ENCODE measurements at regions of chr20 and their contacts with region 1.

Region 1: DNA sequence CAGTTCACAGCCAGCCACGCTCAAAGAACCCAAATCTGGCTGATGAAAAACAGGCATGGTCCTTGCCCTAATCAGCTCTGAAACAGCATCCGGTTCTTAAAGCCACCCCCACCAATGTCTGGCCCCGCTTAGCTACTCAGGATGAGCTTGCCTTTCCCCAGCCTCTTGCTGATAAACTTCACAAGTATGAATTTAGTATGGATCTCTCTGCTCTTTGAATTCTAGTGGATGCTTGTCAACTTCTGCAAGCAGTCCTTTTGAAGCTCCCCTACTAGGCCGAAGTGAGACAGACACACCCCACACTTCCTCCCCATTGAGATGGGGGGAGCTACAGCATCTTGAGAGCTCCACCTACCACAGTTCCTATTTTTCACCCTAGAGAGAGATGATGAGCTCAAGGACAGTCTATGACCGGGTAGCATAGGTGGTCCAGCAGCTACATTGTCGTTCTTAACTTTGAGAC is 36.7 kb downstream of the EBF4 start:
- DNase-seq: peak in 8 of 10 donors; percentile 27 to 71 (median 45)
- ATAC-seq: peak; percentile 97 to 98
- H3K4me3 Mint-ChIP-seq: peak overlapping the region; percentile 58 to 83 (median 73)
- H3K27ac Mint-ChIP-seq: peak overlapping the region; percentile 20 to 97 (median 94)
- H3K4me1 Mint-ChIP-seq: peaks cover 9 to 34% (median 28%) of the 10 kb centered on the region in 4 donors
- H3K27me3 Mint-ChIP-seq: peaks cover 0 to 7% (median 0%) of the 10 kb centered on the region in 5 donors

Region 2: DNA sequence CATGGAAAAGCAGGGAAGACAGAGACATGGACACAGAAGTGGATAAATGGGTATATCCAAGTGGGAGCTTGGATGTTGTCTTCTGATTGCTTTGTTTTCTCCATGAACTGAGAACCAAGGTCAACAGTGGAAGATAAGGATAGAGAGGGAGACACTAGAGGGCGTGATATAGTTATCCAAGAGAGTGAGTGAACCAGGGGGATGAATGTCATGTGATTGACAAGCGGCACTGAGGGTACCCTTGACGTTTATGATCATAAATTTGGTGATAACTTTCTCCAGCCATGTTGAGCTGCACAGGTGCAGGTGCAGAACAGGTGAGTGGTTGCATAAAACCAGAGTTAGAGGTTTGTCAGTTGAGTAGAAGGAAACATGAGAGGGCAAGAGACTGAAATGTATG is 16.0 kb before region 1 on chr20:
- POLR2A ChIA-PET with region 1: interaction called, 10 read pairs
- DNase-seq: peak in 4 of 10 donors; percentile 31 to 67 (median 56)
- ATAC-seq: peak; percentile 78 to 93
- H3K4me3 Mint-ChIP-seq: no peak overlapping the region
- H3K27ac Mint-ChIP-seq: no peak overlapping the region
- H3K4me1 Mint-ChIP-seq: peaks cover 0 to 3% (median 2%) of the 10 kb centered on the region in 4 donors
- H3K27me3 Mint-ChIP-seq: peaks cover 0 to 4% (median 0%) of the 10 kb centered on the region in 5 donors

Region 3: GRCh38 chr20:2752567-2753460 is 23.5 kb after region 1 on chr20:
- POLR2A ChIA-PET with region 1: interaction called, 14 read pairs
- DNase-seq: peak in 8 of 10 donors; percentile 23 to 58 (median 51)
- ATAC-seq: peak; percentile 22 to 26
- H3K4me3 Mint-ChIP-seq: peak overlapping the region; percentile 78 to 90 (median 84)
- H3K27ac Mint-ChIP-seq: peak overlapping the region in 8 of 10 donors; percentile 40 to 89 (median 67)
- H3K4me1 Mint-ChIP-seq: peaks cover 14 to 28% (median 26%) of the 10 kb centered on the region in 4 donors
- H3K27me3 Mint-ChIP-seq: peaks cover 3 to 14% (median 9%) of the 10 kb centered on the region in 5 donors

Region 4: DNA sequence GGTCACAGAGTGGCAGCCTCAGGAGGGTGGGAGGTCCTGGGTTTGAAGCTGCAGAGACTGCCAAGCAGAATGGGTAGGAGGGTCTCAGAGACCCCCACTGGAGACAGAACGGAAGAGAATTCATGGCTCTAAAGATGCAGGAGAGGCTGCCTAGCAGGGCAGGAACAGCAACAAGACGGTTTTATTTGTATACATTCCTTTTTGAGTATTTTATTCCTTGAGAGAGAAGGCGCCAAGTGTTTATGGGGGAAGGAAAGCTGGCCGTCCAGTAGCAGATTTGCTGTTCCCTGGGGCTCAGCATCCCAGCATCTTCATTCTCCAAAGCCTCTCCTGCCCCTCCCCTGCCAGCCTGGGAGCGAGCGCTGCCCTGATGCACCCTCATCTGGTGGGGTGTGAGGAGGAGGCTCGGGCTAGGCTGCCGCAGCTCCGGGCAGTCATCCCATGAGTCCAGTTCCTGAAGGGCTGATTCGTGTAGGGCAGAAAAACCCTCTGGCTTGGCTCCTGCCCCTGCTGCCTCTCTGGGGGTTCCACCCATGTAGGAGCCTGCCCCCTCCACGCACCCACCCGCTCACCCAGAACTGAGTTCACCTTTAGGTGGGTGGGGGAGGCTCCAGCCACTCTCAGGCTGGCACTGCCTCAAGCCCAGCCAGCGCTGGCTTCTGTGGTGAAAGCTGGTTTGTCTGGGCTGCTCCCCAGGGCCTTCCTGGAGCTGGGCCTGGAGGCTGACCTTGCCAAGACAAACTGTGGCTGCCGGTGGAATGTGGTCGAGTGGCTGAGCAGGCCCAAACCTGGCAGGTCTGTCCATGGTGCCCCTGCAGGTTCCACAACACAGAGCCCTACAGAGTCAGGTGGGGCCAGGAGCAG is 38.7 kb after region 1 on chr20:
- POLR2A ChIA-PET with region 1: no interaction called
- DNase-seq: no peak
- ATAC-seq: no peak
- H3K4me3 Mint-ChIP-seq: no peak overlapping the region
- H3K27ac Mint-ChIP-seq: peak overlapping the region in 1 of 10 donors; percentile 60
- H3K4me1 Mint-ChIP-seq: peaks cover 0 to 6% (median 3%) of the 10 kb centered on the region in 4 donors
- H3K27me3 Mint-ChIP-seq: peaks cover 4 to 25% (median 12%) of the 10 kb centered on the region in 5 donors